Esophagus muscularis mucosa (tissue), 4 donors: ENCODE measurements at regions of chr1 and their contacts with region 1.

Region 1: GRCh38 chr1:231211005-231211857 is 29.8 kb upstream of the GNPAT start:
- DNase-seq: no peak
- H3K4me3 ChIP-seq: peak overlapping the region; percentile 35 to 54 (median 48)
- H3K27ac ChIP-seq: no peak overlapping the region
- H3K4me1 ChIP-seq: peaks cover 0 to 8% (median 7%) of the 10 kb centered on the region in 4 donors
- H3K27me3 ChIP-seq: peaks cover 0 to 36% (median 0%) of the 10 kb centered on the region in 4 donors
- CTCF ChIP-seq: peak; percentile 73 to 95 (median 81)
- EP300 ChIP-seq: no peak
- POLR2A ChIP-seq: no peak

Region 2: GRCh38 chr1:230917284-230918135 is 293.7 kb before region 1 on chr1:
- intact Hi-C with region 1: loop called (anchors 5 kb)
- DNase-seq: peak; percentile 92
- H3K4me3 ChIP-seq: no peak overlapping the region
- H3K27ac ChIP-seq: no peak overlapping the region
- H3K4me1 ChIP-seq: no peaks in the 10 kb centered on the region
- H3K27me3 ChIP-seq: no peaks in the 10 kb centered on the region
- CTCF ChIP-seq: peak; percentile 55 to 78 (median 63)
- EP300 ChIP-seq: no peak
- POLR2A ChIP-seq: no peak